ENCODE measurements at regions of chr20 and their contacts with region 1.

Region 1: DNA sequence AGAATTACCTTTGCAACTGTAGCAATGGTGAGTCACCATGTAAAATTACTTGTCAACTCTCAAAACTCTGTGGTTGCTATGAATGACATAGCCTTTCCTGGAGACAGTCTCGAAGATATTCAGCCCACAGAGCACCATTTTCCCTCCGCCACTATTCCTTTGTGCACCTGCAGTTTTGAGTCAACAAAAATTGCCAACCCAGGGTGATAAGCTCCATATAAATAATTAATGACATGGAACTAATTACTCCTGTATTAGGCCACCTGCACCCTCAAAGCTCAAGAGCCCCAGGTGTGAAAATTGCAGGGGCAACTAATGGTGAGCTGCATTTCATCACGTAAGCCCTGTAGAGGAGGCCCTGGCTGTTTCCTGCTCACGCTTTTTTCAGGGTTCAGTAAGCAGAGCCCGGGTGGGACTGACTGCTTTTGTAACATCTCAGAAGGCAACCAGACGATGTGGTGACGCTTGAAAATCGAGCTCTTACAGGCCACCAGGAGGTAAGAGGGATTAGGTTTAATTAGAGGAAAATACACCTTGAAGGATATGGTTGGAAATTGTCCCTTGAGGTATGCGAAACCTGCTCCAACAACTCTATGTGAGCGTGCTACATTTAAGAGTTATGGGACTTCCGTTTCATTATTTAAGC is 70.8 kb downstream of the BMP2 start:
- DNase-seq: no peak
- ATAC-seq: no peak
- H3K4me3 ChIP-seq: no peak overlapping the region
- H3K27ac ChIP-seq: no peak overlapping the region
- H3K4me1 ChIP-seq: no peaks in the 10 kb centered on the region
- H3K27me3 ChIP-seq: peaks cover 0 to 27% (median 0%) of the 10 kb centered on the region in 9 donors
- CTCF ChIP-seq: no peak
- POLR2A ChIP-seq: no peak

Region 2: GRCh38 chr20:6888736-6889395 is 50.6 kb after region 1 on chr20:
- intact Hi-C with region 1: loop called in 1 of 10 experiments (anchors 2 kb)
- DNase-seq: no peak
- ATAC-seq: no peak
- H3K4me3 ChIP-seq: no peak overlapping the region
- H3K27ac ChIP-seq: no peak overlapping the region
- H3K4me1 ChIP-seq: peaks cover 0 to 3% (median 0%) of the 10 kb centered on the region in 12 donors
- H3K27me3 ChIP-seq: no peaks in the 10 kb centered on the region
- CTCF ChIP-seq: no peak
- POLR2A ChIP-seq: no peak